OCI-LY7 (cell line): ENCODE measurements at regions of chr20 and their contacts with region 1.

Region 1: DNA sequence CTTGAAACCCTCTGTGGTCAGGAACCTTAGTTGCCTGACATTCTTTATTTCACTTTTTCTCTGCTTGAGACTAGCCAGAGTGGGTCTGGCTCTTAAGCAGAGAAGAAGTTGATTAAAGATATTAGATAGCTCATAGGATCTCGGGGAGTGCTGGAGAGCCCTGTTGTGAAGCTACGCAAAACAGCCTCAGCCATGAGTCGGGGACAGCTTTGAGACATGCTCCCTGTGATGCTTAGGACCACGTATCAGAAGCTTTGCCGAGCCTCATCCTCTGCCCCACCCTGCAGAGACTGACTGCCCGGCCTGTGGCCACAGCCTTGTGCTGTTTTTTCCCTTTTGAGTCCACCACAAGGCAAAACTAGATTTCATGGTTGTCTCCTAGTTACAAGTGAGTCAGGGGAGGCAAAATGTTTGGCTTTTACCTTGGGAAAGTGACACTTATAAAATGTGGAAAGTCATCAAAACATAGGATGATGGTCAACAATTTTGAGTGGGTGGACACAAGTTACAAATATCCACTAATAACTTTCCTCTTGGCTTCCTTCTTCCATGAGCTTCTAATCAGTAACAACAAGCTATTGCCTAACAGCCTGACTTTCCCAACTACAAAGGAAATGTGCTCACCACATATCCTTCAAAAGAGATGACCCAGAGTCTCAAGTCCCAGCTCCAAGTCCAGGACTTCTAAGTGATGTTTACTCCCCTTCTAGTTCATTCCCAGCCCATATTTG is 108.4 kb downstream of the JAG1 start:
- DNase-seq: no peak
- H3K4me3 ChIP-seq: no peak overlapping the region
- H3K27ac ChIP-seq: no peak overlapping the region
- H3K4me1 ChIP-seq: no peaks in the 10 kb centered on the region
- CTCF ChIP-seq: no peak

Region 2: DNA sequence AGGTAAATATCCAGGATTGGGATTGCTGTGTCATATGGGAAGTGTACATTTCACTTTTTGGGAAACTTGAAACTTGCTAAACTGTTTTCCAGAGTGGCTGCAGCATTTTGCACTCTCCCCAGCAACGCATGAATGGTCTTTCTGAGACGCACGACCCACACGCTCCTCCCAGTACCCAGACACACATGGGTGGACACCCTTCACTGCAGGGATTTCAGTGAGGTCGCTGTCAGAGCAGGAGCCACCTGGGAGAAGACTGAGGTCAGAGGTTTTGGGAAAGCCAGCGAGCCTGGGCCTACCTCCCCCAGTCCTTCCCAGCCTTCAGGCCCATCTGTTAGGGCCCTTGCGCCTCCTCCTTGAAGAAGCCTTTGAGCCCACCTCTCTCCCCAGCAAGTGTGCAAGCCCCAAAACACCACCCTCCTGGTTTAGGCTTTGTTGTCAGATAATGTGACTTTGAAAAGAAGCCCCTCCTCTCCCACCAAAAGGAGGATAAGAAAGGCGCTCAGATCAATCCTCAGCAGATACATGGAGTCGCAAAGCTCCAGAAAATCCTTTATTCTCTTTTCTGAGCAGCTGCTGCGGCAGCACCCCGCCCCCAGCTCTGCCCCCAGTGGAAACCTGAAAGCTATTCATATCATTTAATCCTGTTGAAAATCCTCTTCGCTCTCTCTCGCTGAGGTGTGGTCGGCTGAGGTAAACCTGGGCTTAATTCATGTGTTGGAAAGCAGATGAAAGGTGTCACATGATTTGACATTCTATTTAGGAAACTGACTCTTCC is 121.2 kb after region 1 on chr20:
- CTCF ChIA-PET with region 1: no interaction called
- POLR2A ChIA-PET with region 1: no interaction called
- intact Hi-C with region 1: no loop called
- DNase-seq: no peak
- H3K4me3 ChIP-seq: no peak overlapping the region
- H3K27ac ChIP-seq: no peak overlapping the region
- H3K4me1 ChIP-seq: no peaks in the 10 kb centered on the region
- CTCF ChIP-seq: no peak

Region 3: DNA sequence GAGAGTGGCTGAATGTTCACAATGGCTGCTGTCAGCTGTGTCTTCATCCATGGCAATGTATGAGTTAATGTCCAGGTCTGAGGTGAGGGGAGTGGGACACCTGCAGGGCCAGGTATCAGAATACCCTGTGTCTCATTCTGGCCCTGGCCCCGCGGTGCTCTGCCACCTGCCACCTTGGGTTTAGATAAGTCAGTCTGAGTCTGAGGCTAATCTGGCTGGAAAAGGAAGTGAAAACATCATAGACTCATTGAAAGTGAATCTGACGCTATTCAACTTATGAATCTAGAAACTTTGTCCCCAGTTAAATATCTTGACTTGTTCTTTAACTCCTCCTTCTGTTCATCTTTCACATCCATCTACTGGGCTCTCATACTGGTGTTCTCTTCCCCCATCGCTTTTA is 375.6 kb after region 1 on chr20:
- CTCF ChIA-PET with region 1: no interaction called
- POLR2A ChIA-PET with region 1: no interaction called
- intact Hi-C with region 1: no loop called
- DNase-seq: no peak
- H3K4me3 ChIP-seq: no peak overlapping the region
- H3K27ac ChIP-seq: no peak overlapping the region
- H3K4me1 ChIP-seq: no peaks in the 10 kb centered on the region
- CTCF ChIP-seq: no peak

Region 4: DNA sequence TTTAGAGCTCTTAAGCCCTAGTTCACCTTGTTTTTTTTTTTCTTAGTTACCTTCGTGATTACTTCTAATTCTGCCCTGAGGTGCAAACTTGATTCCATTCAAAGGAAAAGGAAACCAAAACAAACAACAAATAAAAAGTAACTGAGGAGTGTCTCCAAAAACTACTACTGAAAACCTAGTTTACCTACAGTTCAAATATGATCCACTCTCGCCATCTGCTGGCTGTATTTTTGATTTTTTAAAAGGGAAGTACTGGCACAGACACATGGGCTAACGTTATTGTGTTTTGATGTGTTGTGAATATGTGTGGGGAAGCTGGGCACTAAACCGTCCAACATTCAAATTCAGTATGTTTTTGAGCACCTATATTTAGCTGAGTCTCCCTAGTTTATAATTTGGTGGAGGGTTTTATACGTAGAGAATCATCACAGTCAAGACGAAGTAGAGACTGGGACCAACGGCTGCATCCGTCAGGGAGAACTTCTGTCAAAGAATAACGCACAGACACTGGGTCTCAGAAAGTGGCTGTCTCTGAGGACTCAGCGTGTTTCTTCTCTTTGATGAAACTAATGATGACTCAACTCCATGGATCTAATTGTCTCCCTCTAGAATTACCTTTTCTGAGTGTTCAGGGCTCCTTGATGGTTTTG is 978.8 kb after region 1 on chr20:
- CTCF ChIA-PET with region 1: no interaction called
- POLR2A ChIA-PET with region 1: no interaction called
- intact Hi-C with region 1: loop called (anchors 10 kb)
- DNase-seq: peak; percentile 41
- H3K4me3 ChIP-seq: no peak overlapping the region
- H3K27ac ChIP-seq: no peak overlapping the region
- H3K4me1 ChIP-seq: no peaks in the 10 kb centered on the region
- CTCF ChIP-seq: peak; percentile 73